Endothelial cell of umbilical vein (primary cell): ENCODE measurements at regions of chr10 and their contacts with region 1.

Region 1: DNA sequence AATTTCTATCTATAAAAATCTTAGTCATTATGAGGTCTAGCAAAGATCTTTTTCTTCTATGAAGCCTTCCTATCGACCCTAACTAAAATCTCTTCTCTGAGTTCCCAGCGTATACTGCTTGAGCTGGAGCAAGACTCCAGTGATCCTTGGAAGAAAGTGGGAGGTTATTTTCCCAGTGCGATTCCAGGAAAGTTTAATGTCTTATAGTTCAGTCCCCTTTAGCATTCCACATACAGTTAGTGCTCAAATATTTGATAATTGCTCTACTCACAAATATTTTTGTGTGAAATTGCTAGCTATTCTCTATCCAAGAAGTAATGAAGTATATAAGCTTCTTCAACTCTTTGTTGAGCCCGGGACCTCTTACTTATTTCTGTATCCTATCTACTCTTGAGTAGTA is 47.7 kb downstream of the ZEB1 start:
- DNase-seq: no peak
- H3K4me3 ChIP-seq: no peak overlapping the region
- H3K27ac ChIP-seq: no peak overlapping the region
- H3K4me1 ChIP-seq: no peaks in the 10 kb centered on the region
- H3K27me3 ChIP-seq: no peaks in the 10 kb centered on the region
- CTCF ChIP-seq: no peak
- POLR2A ChIP-seq: no peak

Region 2: DNA sequence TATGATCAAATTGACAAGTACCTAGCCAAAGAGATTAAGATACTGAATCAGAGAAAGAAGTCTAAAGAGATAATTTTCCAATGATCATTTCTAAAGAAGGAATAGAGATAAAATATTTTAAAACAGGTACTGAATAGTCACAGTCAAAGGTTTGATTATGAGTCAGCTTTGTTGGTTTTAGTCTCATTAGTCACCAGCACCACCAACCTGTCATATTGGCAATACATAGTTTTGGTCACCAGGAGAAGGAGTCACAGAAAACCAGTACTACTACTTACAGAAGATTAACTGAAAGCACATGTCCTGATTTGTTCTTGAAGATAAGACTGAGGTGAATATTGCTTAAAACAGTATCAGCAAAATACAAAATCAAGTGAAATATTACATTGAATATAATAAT is 13.1 kb before region 1 on chr10:
- CTCF ChIA-PET with region 1: interaction called, 11 read pairs
- POLR2A ChIA-PET with region 1: no interaction called
- dilution Hi-C with region 1: no loop called
- intact Hi-C with region 1: no loop called
- DNase-seq: peak; percentile 66
- H3K4me3 ChIP-seq: no peak overlapping the region
- H3K27ac ChIP-seq: no peak overlapping the region
- H3K4me1 ChIP-seq: peaks cover 9% of the 10 kb centered on the region
- H3K27me3 ChIP-seq: no peaks in the 10 kb centered on the region
- CTCF ChIP-seq: no peak
- POLR2A ChIP-seq: no peak